ENCODE measurements at regions of chr12 and their contacts with region 1.

Region 1: DNA sequence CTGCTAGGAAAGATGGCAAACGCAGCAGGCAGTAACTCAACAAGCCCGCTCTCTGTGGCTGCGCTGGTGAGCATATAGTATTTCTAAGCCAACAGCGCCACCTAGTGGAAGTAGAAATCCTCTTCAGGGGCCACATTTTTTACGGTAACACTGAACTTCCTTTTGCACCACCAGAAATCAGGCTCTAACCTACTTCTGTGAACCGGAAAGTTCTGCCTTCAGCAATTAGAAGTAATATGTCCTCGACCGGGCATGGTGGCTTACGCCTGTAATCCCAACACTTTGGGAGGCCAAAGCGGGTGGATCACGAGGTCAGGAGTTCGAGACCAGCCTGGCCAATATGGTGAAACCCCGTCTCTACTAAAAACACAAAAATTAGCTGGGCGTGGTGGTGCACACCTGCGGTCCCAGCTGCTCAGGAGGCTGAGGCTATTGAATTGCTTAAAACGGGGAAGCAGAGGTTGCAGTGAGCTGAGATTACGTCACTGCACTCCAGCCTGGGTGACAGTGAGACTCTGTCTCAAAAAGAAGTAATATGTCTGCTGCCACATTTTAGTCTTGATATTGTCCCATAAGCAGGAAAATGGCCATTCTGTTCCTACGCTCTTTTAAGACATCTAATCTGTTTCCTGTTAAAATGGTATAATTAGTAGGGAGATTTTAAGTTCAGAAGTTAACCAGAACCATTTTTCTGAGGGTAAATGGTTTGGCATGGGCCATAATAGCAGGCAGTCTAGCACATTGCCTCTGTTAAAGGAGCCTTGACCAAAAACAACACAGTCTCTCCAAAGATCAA is 26.8 kb downstream of the APOBEC1 start:
- DNase-seq: peak; percentile 75
- H3K4me3 ChIP-seq: peak overlapping the region in 1 of 3 experiments; percentile 16
- H3K27ac ChIP-seq: no peak overlapping the region
- H3K4me1 ChIP-seq: no peaks in the 10 kb centered on the region
- H3K27me3 ChIP-seq: peaks cover 5 to 7% of the 10 kb centered on the region in 2 experiments
- CTCF ChIP-seq: peak; percentile 70
- POLR2A ChIP-seq: no peak

Region 2: GRCh38 chr12:6613776-6614512 is 1025.0 kb before region 1 on chr12:
- CTCF ChIA-PET with region 1: no interaction called
- POLR2A ChIA-PET with region 1: no interaction called
- dilution Hi-C with region 1: no loop called
- intact Hi-C with region 1: loop called (anchors 10 kb)
- DNase-seq: peak; percentile 87
- H3K4me3 ChIP-seq: no peak overlapping the region
- H3K27ac ChIP-seq: no peak overlapping the region
- H3K4me1 ChIP-seq: peaks cover 11% of the 10 kb centered on the region
- H3K27me3 ChIP-seq: no peaks in the 10 kb centered on the region
- CTCF ChIP-seq: no peak
- POLR2A ChIP-seq: peak; percentile 39

Region 3: GRCh38 chr12:7142056-7142644 is 496.8 kb before region 1 on chr12:
- CTCF ChIA-PET with region 1: interaction called, 11 read pairs
- POLR2A ChIA-PET with region 1: no interaction called
- dilution Hi-C with region 1: no loop called
- intact Hi-C with region 1: loop called (anchors 1 kb)
- DNase-seq: peak; percentile 58
- H3K4me3 ChIP-seq: no peak overlapping the region
- H3K27ac ChIP-seq: no peak overlapping the region
- H3K4me1 ChIP-seq: no peaks in the 10 kb centered on the region
- H3K27me3 ChIP-seq: no peaks in the 10 kb centered on the region
- CTCF ChIP-seq: peak; percentile 81 to 86
- POLR2A ChIP-seq: no peak

Region 4: GRCh38 chr12:7219599-7220243 is 419.2 kb before region 1 on chr12:
- CTCF ChIA-PET with region 1: interaction called, 9 read pairs
- POLR2A ChIA-PET with region 1: no interaction called
- dilution Hi-C with region 1: no loop called
- intact Hi-C with region 1: loop called (anchors 1 kb)
- DNase-seq: peak; percentile 71
- H3K4me3 ChIP-seq: no peak overlapping the region
- H3K27ac ChIP-seq: no peak overlapping the region
- H3K4me1 ChIP-seq: no peaks in the 10 kb centered on the region
- H3K27me3 ChIP-seq: peaks cover 0 to 1% of the 10 kb centered on the region in 2 experiments
- CTCF ChIP-seq: peak; percentile 74 to 75
- POLR2A ChIP-seq: no peak

Region 5: GRCh38 chr12:7282844-7283243 is 356.1 kb before region 1 on chr12:
- CTCF ChIA-PET with region 1: no interaction called
- POLR2A ChIA-PET with region 1: no interaction called
- dilution Hi-C with region 1: no loop called
- intact Hi-C with region 1: no loop called
- DNase-seq: no peak
- H3K4me3 ChIP-seq: no peak overlapping the region
- H3K27ac ChIP-seq: no peak overlapping the region
- H3K4me1 ChIP-seq: peaks cover 3% of the 10 kb centered on the region
- H3K27me3 ChIP-seq: no peaks in the 10 kb centered on the region
- CTCF ChIP-seq: no peak
- POLR2A ChIP-seq: no peak

Region 6: DNA sequence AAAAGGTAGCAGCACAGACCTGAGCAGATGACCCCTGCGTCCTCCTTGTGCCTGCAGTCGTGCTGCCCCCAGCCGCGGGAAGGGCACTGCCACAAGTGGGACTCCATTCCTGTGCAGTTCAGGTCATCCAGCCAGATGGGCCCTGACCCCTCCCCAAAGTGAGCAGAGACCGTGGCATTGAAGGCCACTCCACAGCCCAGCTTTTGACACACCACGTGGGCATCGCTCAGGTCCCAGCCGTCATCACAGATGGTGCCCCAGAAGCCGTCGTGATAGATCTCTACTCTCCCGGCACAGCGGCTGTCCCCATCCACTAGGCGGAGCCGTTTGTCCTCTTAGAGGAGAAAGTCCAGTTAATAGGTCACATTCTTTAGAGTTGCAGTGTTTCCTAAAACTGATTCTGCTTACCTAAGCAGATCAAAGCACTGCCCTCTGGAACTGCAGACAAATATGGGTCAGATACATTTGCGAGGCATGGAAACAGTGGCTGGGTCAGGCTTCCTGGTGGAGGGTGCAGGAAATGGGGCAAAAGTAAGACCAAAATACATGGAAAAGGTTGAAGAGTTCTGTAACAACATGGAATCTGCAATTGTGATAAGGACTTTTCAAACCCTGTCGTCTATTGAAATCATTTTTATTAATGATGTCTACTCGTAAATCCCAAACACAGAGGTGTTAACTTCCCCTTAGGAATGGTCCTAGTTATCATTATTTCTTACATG is 264.4 kb before region 1 on chr12:
- CTCF ChIA-PET with region 1: interaction called, 3 read pairs
- POLR2A ChIA-PET with region 1: no interaction called
- dilution Hi-C with region 1: no loop called
- intact Hi-C with region 1: loop called (anchors 2 kb)
- DNase-seq: peak; percentile 51
- H3K4me3 ChIP-seq: no peak overlapping the region
- H3K27ac ChIP-seq: no peak overlapping the region
- H3K4me1 ChIP-seq: no peaks in the 10 kb centered on the region
- H3K27me3 ChIP-seq: no peaks in the 10 kb centered on the region
- CTCF ChIP-seq: peak; percentile 71 to 73
- POLR2A ChIP-seq: no peak

Region 7: GRCh38 chr12:7460375-7461259 is 178.3 kb before region 1 on chr12:
- CTCF ChIA-PET with region 1: no interaction called
- POLR2A ChIA-PET with region 1: no interaction called
- dilution Hi-C with region 1: no loop called
- intact Hi-C with region 1: loop called (anchors 1 kb)
- DNase-seq: peak; percentile 73
- H3K4me3 ChIP-seq: no peak overlapping the region
- H3K27ac ChIP-seq: no peak overlapping the region
- H3K4me1 ChIP-seq: no peaks in the 10 kb centered on the region
- H3K27me3 ChIP-seq: peaks cover 2 to 4% of the 10 kb centered on the region in 2 experiments
- CTCF ChIP-seq: peak; percentile 83 to 86
- POLR2A ChIP-seq: no peak

Region 8: GRCh38 chr12:7583571-7583970 is 55.4 kb before region 1 on chr12:
- CTCF ChIA-PET with region 1: interaction called, 9 read pairs
- POLR2A ChIA-PET with region 1: no interaction called
- dilution Hi-C with region 1: no loop called
- intact Hi-C with region 1: loop called (anchors 1 kb)
- DNase-seq: no peak
- H3K4me3 ChIP-seq: no peak overlapping the region
- H3K27ac ChIP-seq: no peak overlapping the region
- H3K4me1 ChIP-seq: no peaks in the 10 kb centered on the region
- H3K27me3 ChIP-seq: peaks cover 2 to 3% of the 10 kb centered on the region in 2 experiments
- CTCF ChIP-seq: no peak
- POLR2A ChIP-seq: no peak